ENCODE measurements at regions of chr14 and their contacts with region 1.

Region 1: GRCh38 chr14:103679351-103679750 is 35.9 kb downstream of the XRCC3 start:
- DNase-seq: peak; percentile 71
- ATAC-seq: peak; percentile 92
- H3K4me3 Mint-ChIP-seq: no peak overlapping the region
- H3K27ac Mint-ChIP-seq: peak overlapping the region; percentile 74
- H3K4me1 Mint-ChIP-seq: peaks cover 8% of the 10 kb centered on the region
- H3K27me3 Mint-ChIP-seq: no peaks in the 10 kb centered on the region
- CTCF ChIP-seq: peak; percentile 57

Region 2: DNA sequence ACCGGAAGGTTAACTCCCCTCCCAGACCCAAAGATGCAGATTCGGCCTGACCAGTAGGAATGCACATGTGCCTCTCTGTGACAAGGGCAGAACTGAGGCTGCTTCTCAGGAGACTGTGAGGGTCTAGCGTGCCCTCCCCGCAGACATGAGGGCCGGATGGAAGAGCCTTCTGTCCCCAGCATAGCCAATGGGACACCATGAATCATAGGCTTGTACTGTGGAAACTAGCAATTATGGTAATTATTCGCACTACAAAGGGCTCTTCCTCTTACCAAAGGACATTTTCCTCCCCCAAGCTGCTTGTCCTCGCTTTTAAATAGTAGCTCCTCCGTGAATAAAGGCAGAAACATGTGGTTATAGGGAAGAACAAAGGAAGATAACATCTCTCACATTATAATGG is 110.4 kb before region 1 on chr14:
- CTCF ChIA-PET with region 1: interaction called, 13 read pairs
- POLR2A ChIA-PET with region 1: no interaction called
- intact Hi-C with region 1: loop called (anchors 5 kb)
- DNase-seq: no peak
- ATAC-seq: no peak
- H3K4me3 Mint-ChIP-seq: no peak overlapping the region
- H3K27ac Mint-ChIP-seq: no peak overlapping the region
- H3K4me1 Mint-ChIP-seq: peaks cover 10% of the 10 kb centered on the region
- H3K27me3 Mint-ChIP-seq: no peaks in the 10 kb centered on the region
- CTCF ChIP-seq: no peak

Region 3: DNA sequence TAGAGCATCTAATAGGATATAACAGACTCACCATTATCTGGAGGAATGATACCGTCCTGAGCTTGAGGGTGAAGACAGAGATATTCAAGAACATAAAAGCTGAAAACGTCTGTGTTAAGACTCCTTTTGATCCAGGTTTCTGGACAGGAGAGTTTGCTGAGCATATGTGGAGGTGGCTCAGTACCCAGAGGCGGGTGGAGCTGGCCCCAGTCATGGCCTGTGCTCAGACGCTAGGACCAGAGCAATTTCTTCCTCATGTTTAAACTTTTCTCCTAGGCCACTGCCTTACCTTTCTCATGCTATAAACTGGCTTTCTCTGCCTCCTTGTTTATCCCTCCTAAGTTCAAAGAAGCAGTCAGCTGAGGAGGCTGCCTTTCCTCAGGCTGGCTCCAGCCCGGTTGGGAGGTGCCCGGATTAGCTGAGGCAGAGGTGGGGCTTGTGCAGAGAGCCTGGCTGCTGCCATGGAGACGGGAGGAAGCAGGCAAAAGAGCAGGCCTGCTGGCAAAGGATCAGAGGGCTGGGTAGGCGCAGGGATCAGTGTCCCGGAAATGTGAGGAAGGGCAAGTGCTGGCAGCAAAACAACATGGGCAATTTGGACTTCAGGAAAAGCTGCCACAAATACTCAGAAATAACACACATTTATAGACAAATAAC is 102.9 kb before region 1 on chr14:
- CTCF ChIA-PET with region 1: interaction called, 5 read pairs
- POLR2A ChIA-PET with region 1: no interaction called
- intact Hi-C with region 1: loop called (anchors 5 kb)
- DNase-seq: no peak
- ATAC-seq: no peak
- H3K4me3 Mint-ChIP-seq: no peak overlapping the region
- H3K27ac Mint-ChIP-seq: no peak overlapping the region
- H3K4me1 Mint-ChIP-seq: no peaks in the 10 kb centered on the region
- H3K27me3 Mint-ChIP-seq: no peaks in the 10 kb centered on the region
- CTCF ChIP-seq: no peak